ENCODE measurements at regions of chr1 and their contacts with region 1.

Region 1: GRCh38 chr1:45884700-45885099 is 81.3 kb downstream of the MAST2 start:
- DNase-seq: peak; percentile 83
- ATAC-seq: peak; percentile 98
- H3K4me3 ChIP-seq: no peak overlapping the region
- H3K27ac ChIP-seq: peak overlapping the region; percentile 54
- H3K4me1 ChIP-seq: peaks cover 19% of the 10 kb centered on the region
- H3K27me3 ChIP-seq: no peaks in the 10 kb centered on the region
- CTCF ChIP-seq: no peak

Region 2: DNA sequence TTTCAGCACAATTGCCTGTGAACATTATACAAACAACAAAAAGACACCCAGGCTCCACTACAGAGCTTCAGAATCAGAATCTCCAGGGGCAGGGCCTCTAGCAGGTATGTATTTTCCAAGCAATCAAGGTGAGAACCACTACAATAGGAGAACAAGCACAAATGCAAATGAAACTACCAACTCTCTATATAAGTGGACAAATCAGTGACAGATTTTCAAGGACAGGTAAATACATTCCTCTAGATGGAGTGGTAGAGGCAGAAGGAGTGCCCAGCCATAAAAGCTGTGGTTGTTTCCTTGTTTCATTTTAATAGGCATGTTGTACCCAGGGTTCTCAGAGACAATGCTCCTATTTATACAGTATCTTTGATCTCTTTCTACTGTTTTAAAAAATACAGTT is 240.7 kb before region 1 on chr1:
- CTCF ChIA-PET with region 1: no interaction called
- POLR2A ChIA-PET with region 1: no interaction called
- intact Hi-C with region 1: loop called (anchors 1 kb)
- DNase-seq: peak; percentile 43
- ATAC-seq: peak; percentile 95
- H3K4me3 ChIP-seq: no peak overlapping the region
- H3K27ac ChIP-seq: no peak overlapping the region
- H3K4me1 ChIP-seq: no peaks in the 10 kb centered on the region
- H3K27me3 ChIP-seq: no peaks in the 10 kb centered on the region
- CTCF ChIP-seq: peak; percentile 52

Region 3: GRCh38 chr1:45809761-45810160 is 74.9 kb before region 1 on chr1:
- CTCF ChIA-PET with region 1: no interaction called
- POLR2A ChIA-PET with region 1: no interaction called
- intact Hi-C with region 1: loop called (anchors 2 kb)
- DNase-seq: peak; percentile 31
- ATAC-seq: peak; percentile 70
- H3K4me3 ChIP-seq: no peak overlapping the region
- H3K27ac ChIP-seq: no peak overlapping the region
- H3K4me1 ChIP-seq: peaks cover 21% of the 10 kb centered on the region
- H3K27me3 ChIP-seq: no peaks in the 10 kb centered on the region
- CTCF ChIP-seq: no peak

Region 4: DNA sequence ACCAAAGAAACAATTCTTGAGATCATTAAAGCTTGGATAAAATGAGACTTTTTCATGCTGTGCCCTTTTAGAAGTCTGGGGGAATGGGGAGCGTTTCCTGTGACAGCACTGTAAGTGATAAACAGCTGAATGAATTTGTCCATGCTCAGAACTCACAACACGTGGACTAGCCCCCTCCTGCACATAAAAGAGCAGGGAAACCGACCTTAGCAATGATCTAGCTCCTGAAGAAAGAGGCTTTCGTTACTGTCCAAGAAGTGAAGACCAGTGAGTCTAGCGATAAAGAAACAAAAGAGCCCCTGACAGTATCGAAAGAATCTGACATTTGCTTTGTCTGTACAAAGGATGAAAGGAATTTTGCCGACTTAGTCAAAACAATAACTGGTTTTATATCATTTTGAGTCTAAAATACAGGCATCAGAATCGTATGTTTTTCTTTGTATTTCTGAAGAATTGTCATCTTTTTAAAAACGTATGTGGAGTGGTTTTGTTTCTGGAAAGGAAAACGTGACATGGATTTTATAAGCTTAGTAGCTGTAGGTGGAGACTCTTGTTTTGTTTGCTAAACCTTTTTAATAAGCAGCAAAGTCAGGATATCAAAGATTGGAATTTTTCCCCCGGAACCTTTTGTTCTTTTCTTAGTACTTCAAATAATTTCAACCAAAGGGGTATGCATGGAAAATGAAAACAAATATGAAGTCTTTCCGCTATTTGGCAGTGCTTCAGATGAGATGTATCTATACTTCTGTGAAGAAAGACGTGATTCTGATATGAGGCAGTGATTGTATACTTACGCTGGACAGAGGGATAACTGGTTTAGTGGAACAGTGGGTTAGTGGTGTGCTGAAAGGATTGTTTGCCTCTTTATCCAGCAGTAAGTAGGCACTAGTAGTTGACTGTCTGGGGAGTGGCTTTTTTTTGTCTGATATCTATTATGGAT is 20.3 kb before region 1 on chr1:
- CTCF ChIA-PET with region 1: no interaction called
- POLR2A ChIA-PET with region 1: interaction called, 10 read pairs
- intact Hi-C with region 1: loop called (anchors 1 kb)
- DNase-seq: peak; percentile 28
- ATAC-seq: peak; percentile 59
- H3K4me3 ChIP-seq: peak overlapping the region; percentile 61
- H3K27ac ChIP-seq: peak overlapping the region; percentile 36
- H3K4me1 ChIP-seq: peaks cover 42% of the 10 kb centered on the region
- H3K27me3 ChIP-seq: no peaks in the 10 kb centered on the region
- CTCF ChIP-seq: no peak

Region 5: GRCh38 chr1:45934947-45935346 is 50.2 kb after region 1 on chr1:
- CTCF ChIA-PET with region 1: no interaction called
- POLR2A ChIA-PET with region 1: no interaction called
- intact Hi-C with region 1: no loop called
- DNase-seq: no peak
- ATAC-seq: no peak
- H3K4me3 ChIP-seq: no peak overlapping the region
- H3K27ac ChIP-seq: no peak overlapping the region
- H3K4me1 ChIP-seq: 0 out of 2 replicates have a peak, but pooled peaks cover under 1% of the 10 kb centered on the region
- H3K27me3 ChIP-seq: no peaks in the 10 kb centered on the region
- CTCF ChIP-seq: no peak

Region 6: GRCh38 chr1:45954401-45954847 is 69.7 kb after region 1 on chr1:
- CTCF ChIA-PET with region 1: no interaction called
- POLR2A ChIA-PET with region 1: no interaction called
- intact Hi-C with region 1: no loop called
- DNase-seq: peak; percentile 25
- ATAC-seq: peak; percentile 76
- H3K4me3 ChIP-seq: no peak overlapping the region
- H3K27ac ChIP-seq: no peak overlapping the region
- H3K4me1 ChIP-seq: peaks cover 8% of the 10 kb centered on the region
- H3K27me3 ChIP-seq: no peaks in the 10 kb centered on the region
- CTCF ChIP-seq: no peak

Region 7: DNA sequence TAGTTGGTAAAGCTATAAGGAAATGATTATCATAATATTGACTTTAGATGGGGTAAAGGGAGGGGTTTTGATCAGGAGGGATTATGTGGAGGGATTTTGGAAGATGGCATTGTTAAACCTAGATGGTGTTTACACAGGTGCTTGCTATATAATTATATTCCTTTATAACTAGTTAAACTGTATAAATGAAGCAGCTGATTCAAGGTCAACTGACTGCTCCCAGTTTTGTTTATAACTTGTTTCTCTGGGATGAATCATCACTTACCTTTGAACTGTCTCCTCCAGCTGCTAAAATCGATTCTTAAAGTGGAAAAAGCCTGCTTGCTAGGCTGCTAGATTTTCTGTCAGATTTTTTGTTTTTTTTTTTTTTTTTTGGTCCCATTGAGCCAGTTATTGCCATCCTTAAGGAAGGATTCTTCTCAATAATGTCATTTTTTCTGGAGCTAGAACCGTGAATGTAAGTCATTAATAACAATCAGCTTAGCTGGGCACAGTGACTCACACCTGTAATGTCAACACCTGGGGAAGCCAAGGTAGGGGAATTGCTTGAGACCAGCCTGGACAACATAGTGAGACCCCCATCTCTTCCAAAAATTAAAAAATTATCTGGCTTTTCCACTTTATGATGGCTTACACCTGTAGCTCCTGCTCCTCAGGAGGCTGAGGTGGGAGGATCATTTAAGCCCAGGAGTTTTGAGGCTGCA is 94.5 kb after region 1 on chr1:
- CTCF ChIA-PET with region 1: no interaction called
- POLR2A ChIA-PET with region 1: no interaction called
- intact Hi-C with region 1: loop called (anchors 10 kb)
- DNase-seq: peak; percentile 50
- ATAC-seq: peak; percentile 77
- H3K4me3 ChIP-seq: no peak overlapping the region
- H3K27ac ChIP-seq: no peak overlapping the region
- H3K4me1 ChIP-seq: peaks cover 11% of the 10 kb centered on the region; the same call in 1 of the 2 replicates
- H3K27me3 ChIP-seq: no peaks in the 10 kb centered on the region
- CTCF ChIP-seq: no peak

Region 8: DNA sequence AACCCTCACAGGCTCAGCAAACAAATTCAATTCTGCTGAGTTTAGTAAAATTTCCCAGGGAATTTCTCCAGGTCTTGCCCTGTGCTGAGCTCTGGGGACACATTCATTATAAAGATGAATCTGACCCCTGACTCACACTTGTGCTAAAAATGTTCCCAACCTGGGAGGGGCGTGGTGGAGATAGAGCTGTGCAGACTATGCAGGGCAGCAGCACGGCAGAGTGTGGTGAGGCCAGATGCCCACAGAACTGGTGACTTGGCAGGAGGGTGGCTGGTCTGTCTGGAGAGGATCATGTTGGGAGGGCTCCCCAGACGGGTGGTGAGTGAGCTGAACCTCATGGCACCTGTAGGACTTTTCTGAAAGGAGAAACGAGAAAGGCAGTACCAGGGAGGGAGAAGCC is 541.0 kb after region 1 on chr1:
- CTCF ChIA-PET with region 1: no interaction called
- POLR2A ChIA-PET with region 1: no interaction called
- intact Hi-C with region 1: no loop called
- DNase-seq: no peak
- ATAC-seq: no peak
- H3K4me3 ChIP-seq: no peak overlapping the region
- H3K27ac ChIP-seq: no peak overlapping the region
- H3K4me1 ChIP-seq: no peaks in the 10 kb centered on the region
- H3K27me3 ChIP-seq: no peaks in the 10 kb centered on the region
- CTCF ChIP-seq: no peak